ENCODE measurements at regions of chr7 and their contacts with region 1.

Region 1: DNA sequence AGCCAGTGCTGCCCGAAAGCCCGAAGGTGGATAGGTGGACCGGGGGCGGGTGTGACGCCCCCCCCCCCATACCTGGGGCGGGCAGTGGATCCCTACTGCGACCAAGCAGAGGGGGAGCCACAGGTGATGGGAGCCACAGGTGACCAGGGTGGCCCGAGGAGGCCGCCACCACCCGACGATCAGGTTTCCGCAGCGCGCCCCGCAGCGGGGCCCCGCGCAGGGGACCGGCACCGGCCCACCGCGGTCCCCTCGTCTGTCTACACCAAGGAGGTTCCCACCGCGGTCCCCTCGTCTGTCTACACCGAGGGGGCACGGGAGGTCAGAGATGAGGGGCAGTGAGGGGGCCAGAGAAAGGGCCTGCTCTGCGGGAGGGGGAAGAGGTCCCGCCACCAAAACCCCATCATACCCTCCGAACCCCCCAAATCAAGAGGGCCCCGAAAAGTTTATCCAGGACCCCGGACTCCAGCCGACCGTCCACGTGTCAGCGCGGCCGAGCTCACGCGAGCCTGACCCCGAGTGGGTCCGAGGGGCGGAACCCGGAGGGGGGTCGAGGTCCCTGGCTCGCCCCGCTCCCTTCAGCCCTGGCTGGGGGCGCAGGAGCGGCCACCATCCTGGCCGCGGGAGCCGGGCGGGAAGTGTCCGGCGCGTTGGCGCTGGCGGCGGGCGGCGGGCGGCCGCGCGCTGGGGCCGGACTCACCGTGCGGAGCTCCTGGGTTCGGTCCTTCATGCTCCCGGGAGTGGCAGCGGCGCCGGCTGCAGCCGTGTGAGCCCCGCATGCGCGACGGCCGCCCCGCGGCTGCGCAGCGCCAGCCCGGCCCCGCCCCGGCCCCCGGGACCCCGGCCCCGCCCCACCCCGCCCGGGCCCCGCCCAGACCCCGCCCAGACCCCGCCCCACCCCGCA is at the start of gene STX1A:
- DNase-seq: peak; percentile 73
- ATAC-seq: peak; percentile 9
- H3K4me3 ChIP-seq: peak within 1 kb of the TSS; percentile 95
- H3K27ac ChIP-seq: peak within 1 kb of the TSS; percentile 100
- H3K4me1 ChIP-seq: peaks cover 50% of the 10 kb centered on the region
- H3K27me3 ChIP-seq: no peaks in the 10 kb centered on the region
- CTCF ChIP-seq: no peak
- total RNA-seq, gene STX1A: 145 and 163 TPM in 2 replicates

Region 2: DNA sequence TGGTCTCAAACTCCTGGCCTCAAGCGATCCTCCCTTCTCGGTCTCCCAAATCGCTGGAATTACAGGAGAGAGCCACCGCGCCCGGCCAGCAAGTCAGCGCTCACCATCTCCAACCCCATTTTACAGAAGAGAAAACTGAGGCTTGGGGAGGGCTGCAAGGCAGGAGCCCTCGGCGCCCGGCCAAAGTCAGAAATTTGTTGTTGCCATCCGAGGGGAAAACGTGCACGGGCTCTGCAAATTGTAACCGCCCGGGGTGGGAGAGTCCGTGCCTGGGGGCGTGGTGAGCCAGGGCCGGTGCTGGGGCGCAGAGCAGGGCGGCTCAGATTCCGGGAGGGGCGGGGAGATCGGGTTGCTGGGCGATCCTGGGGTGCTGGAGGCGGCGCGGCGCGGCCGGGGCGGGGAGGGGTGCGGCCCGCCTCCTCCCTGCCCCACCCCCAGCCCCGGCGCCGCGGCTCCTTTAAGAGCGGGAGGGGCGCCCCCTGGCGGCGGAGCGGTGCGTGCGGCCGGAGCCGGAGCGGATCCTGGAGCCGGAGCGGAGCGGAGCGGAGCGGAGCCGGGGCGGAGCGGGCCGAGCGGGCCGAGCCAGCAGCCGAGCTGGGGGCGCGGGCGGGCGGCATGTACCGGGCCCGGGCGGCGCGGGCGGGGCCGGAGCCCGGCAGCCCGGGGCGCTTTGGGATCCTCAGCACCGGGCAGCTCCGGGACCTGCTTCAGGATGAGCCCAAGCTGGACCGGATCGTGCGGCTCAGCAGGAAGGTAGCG is 51.6 kb before region 1 on chr7 and contains the start of gene VPS37D:
- CTCF ChIA-PET with region 1: interaction called, 6 read pairs
- POLR2A ChIA-PET with region 1: no interaction called
- intact Hi-C with region 1: loop called (anchors 5 kb)
- DNase-seq: peak; percentile 89
- ATAC-seq: peak; percentile 84
- H3K4me3 ChIP-seq: peak within 1 kb of the TSS; percentile 77
- H3K27ac ChIP-seq: no peak within 1 kb of the TSS
- H3K4me1 ChIP-seq: peaks cover 4% of the 10 kb centered on the region; the same call in 1 of the 2 replicates
- H3K27me3 ChIP-seq: no peaks in the 10 kb centered on the region
- CTCF ChIP-seq: peak; percentile 53
- total RNA-seq, gene VPS37D: 6.3 and 7.7 TPM in 2 replicates

Region 3: DNA sequence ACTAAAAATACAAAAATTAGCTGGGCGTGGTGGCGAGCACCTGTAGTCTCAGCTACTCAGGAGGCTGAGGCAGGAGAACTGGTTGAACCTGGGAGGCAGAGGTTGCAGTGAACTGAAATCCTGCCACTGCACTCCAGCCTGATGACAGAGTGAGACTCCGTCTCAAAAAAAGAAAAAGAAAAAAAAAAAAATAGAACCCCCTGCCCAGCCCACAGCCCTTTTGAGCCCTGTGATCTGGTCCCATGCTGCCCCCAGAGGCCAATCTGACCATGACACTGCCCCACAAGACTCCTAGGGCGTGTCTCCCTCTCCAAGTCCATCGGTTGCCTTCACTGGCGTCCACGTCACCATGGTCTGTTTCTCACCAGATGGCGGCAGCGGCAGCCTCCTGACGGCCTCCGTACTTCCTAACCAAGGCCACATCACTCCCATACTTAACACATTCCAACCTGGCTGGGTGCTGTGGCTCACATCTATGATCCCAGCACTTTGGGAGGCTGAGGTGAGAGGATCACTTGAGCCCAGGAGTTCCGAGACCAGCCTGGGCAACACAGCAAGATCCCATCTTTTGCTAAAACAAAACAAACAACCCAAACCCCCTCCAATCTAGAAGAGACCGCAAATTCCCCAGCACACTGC is 17.7 kb before region 1 on chr7:
- CTCF ChIA-PET with region 1: interaction called, 5 read pairs
- POLR2A ChIA-PET with region 1: interaction called, 90 read pairs
- intact Hi-C with region 1: loop called (anchors 2 kb)
- DNase-seq: peak; percentile 52
- ATAC-seq: no peak
- H3K4me3 ChIP-seq: no peak overlapping the region
- H3K27ac ChIP-seq: peak overlapping the region; percentile 16; the same call in 1 of the 2 replicates
- H3K4me1 ChIP-seq: peaks cover 24% of the 10 kb centered on the region
- H3K27me3 ChIP-seq: no peaks in the 10 kb centered on the region
- CTCF ChIP-seq: peak; percentile 55

Region 4: GRCh38 chr7:73707142-73707595 is 12.0 kb before region 1 on chr7:
- CTCF ChIA-PET with region 1: interaction called, 4 read pairs
- POLR2A ChIA-PET with region 1: interaction called, 90 read pairs
- intact Hi-C with region 1: loop called (anchors 1 kb)
- DNase-seq: peak; percentile 89
- ATAC-seq: peak; percentile 36
- H3K4me3 ChIP-seq: peak overlapping the region; percentile 30; the same call in 1 of the 2 replicates
- H3K27ac ChIP-seq: peak overlapping the region; percentile 100
- H3K4me1 ChIP-seq: peaks cover 47% of the 10 kb centered on the region
- H3K27me3 ChIP-seq: no peaks in the 10 kb centered on the region
- CTCF ChIP-seq: no peak

Region 5: DNA sequence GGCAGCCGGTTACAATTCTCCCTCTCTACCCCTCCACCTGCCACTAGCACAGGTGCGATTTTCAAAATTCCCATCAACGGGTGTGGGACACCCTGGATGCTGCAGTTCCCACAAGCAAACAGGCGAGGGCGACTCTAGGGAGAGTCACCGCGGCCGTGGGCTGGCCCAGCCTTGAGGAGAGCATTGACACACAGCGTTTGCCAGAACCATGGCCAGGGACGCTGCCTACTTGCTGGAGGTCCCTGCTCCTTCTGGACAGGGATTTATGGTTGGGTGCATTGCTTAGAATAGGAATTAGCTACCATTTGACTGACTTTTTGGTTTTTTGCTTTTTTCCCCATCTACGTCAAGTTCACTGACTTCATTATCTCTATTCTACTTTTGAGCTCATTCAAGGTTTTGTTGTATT is 92.6 kb after region 1 on chr7:
- CTCF ChIA-PET with region 1: no interaction called
- POLR2A ChIA-PET with region 1: no interaction called
- intact Hi-C with region 1: no loop called
- DNase-seq: peak; percentile 84
- ATAC-seq: peak; percentile 84
- H3K4me3 ChIP-seq: no peak overlapping the region
- H3K27ac ChIP-seq: no peak overlapping the region
- H3K4me1 ChIP-seq: peaks cover 6% of the 10 kb centered on the region
- H3K27me3 ChIP-seq: no peaks in the 10 kb centered on the region
- CTCF ChIP-seq: peak; percentile 81

Region 6: DNA sequence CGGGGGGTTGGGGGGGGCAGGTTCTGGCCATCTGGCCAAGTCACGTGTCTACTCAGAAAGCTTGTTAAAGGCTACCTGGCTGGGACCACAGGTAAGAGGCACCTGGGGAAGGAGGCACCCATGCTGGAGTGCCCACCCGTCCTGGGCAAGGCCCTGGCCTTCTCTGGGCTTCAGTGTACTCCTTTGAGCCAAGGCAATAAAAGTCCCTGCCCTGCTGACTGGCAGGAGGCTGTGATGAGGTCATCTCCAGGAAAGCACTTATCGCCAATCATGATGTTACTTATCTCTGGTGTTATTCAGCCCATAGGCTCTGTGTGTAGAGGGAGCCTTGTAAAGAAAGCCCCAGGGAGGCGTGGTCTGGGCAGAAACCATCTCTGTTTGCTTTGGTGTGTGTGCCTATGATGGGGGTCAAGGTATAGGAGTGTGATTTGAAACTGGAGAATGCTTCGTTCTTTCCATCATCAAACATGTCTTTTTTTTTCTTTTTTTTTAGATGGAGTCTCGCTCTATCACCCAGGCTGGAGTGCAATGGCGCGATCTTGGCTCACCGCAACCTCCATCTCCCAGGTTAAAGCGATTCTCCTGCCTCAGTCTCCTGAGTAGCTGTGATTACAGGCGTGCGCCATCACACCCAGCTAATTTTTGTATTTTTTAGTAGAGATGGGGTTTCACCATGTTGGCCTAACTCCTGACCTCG is 109.1 kb after region 1 on chr7:
- CTCF ChIA-PET with region 1: no interaction called
- POLR2A ChIA-PET with region 1: interaction called, 10 read pairs
- intact Hi-C with region 1: no loop called
- DNase-seq: peak; percentile 92
- ATAC-seq: peak; percentile 44
- H3K4me3 ChIP-seq: 0 out of 2 replicates have a peak overlapping the region, but pooled peaks have one; percentile 99
- H3K27ac ChIP-seq: peak overlapping the region; percentile 96
- H3K4me1 ChIP-seq: peaks cover 59% of the 10 kb centered on the region
- H3K27me3 ChIP-seq: no peaks in the 10 kb centered on the region
- CTCF ChIP-seq: no peak